ENCODE measurements at regions of chr16 and their contacts with region 1.

Region 1: DNA sequence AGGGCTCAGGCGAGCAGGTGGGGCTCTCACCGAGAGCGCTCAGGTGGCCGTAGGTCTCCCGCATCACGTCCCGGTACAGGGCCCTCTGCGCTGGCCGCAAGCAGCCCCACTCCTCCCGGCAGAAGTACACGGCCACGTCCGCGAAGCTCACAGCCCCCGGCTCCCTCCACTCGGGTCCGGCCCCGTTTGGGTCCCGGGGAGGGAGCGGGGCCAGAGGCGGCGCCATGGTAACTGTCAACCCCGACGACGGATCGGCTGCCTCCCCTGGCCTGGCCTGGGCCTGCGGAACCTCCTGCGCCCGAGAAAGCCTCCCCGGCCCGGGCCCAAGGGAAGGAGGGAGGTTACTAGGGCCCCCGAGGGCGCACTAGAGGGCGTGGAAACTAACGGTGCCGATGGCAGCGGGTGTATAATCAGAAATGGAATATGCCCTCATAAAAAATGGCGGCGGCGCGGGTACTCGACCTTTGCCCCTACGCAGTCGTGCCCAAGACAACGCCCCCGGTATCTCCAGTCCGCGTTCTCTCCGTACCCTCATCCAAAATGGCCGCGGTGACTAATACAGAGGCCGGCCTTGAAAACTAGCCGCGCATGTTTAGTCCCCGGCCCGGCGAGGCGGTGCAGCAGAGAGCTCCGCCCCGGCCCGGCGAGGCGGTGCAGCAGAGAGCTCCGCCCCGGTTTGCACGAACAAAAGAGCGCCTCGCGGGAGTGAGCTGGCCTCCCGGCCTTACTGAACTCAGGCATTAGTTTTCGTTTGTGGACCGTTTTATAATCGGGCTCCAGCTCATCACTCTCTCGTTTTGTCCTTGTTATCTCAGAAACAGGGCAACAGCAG is at the start of gene ZNF764:
- DNase-seq: peak; percentile 71
- H3K4me3 ChIP-seq: peak within 1 kb of the TSS; percentile 76
- CTCF ChIP-seq: no peak

Region 2: GRCh38 chr16:30571695-30572600 is 13.8 kb after region 1 on chr16 and contains the start of gene ZNF688:
- CTCF ChIA-PET with region 1: interaction called, 7 read pairs
- POLR2A ChIA-PET with region 1: interaction called, 23 read pairs
- DNase-seq: peak; percentile 89
- H3K4me3 ChIP-seq: peak within 1 kb of the TSS; percentile 68
- CTCF ChIP-seq: no peak

Measured in AG04449 (cell line).